ENCODE measurements at regions of chr15 and their contacts with region 1.

Region 1: DNA sequence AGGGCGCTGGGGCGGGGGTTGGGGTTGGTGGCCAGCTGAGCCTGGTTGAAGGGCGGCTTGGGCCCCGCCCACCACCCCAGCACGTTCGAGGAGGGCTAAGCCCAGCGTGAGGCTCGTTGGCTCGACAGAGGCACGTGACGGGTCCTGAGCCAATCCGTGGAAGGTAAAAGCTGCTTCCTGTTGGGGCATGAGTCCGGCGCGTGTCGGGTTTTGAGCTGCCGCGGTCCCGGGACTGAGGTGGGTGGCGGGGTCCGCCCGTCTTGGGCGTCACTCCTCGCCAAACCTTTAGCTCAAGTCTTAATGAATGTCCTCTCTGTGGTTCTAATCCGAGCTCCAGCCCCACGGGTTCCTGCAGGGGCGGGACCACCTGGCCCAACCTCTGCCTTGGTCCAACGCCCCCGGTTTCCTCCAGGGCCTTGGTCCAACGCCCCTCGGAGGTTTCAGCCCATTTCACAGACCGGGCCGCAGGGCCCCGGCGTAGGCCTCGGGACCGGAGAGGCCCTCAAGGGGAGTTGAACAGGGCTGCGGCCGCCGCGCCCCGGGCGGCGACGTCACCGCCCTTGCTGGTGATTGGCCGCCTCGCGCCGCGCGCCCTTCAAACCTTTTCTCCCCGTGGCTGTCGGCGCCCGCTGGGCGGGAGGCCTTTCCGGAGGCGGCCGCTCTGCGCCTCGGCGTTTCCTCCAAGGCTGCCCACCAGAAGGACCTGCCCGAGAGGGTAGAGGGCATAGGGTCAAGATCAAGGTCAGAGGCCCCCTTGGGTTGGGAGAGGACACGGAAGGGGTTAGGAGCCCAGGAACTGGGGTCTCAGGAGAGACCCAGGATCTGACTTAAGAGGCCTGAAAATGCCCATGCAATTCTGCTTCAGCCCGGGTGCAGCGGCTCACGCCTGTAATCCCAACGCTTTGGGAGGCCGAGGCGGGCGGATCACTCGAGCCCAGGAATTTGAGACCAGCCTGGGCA is at the start of gene RCCD1:
- DNase-seq: peak; percentile 92
- ATAC-seq: peak; percentile 95
- H3K4me3 ChIP-seq: peak within 1 kb of the TSS; percentile 69 to 93 (median 89)
- H3K4me3 Mint-ChIP-seq: peak within 1 kb of the TSS; percentile 90
- H3K27ac ChIP-seq: peak within 1 kb of the TSS; percentile 97
- H3K27ac Mint-ChIP-seq: peak within 1 kb of the TSS; percentile 92
- H3K4me1 ChIP-seq: peaks cover 16 to 24% of the 10 kb centered on the region in 2 donors
- H3K4me1 Mint-ChIP-seq: peaks cover 21% of the 10 kb centered on the region
- H3K27me3 ChIP-seq: no peaks in the 10 kb centered on the region
- H3K27me3 Mint-ChIP-seq: no peaks in the 10 kb centered on the region
- CTCF ChIP-seq: no peak
- total RNA-seq, gene RCCD1: 18.9 and 20.5 TPM in 2 replicates

Region 2: DNA sequence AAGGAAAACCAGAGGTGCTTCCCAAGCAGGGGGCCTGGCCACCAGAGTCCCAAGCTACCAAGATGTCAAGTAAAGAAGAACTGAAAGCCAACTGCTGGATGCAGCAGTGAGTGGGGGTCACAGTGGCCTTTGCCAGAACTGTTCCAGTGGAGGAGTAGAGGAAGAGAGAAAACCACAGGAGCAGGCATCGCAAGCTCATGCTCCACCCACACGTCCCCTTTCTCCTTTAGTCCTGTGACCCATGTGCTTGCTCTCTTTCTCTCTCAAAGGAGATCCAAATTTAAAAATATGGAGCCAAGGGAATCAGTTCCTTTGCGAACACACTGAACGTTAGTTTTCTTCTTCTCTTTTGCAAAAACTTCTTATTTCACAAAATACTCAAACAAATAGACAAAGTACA is 1879.1 kb before region 1 on chr15:
- CTCF ChIA-PET with region 1: no interaction called
- POLR2A ChIA-PET with region 1: no interaction called
- intact Hi-C with region 1: no loop called
- DNase-seq: no peak
- ATAC-seq: no peak
- H3K4me3 ChIP-seq: no peak overlapping the region
- H3K4me3 Mint-ChIP-seq: no peak overlapping the region
- H3K27ac ChIP-seq: no peak overlapping the region
- H3K27ac Mint-ChIP-seq: no peak overlapping the region
- H3K4me1 ChIP-seq: no peaks in the 10 kb centered on the region
- H3K4me1 Mint-ChIP-seq: no peaks in the 10 kb centered on the region
- H3K27me3 ChIP-seq: peaks cover 0 to 7% (median 1%) of the 10 kb centered on the region in 4 experiments
- H3K27me3 Mint-ChIP-seq: peaks cover 33% of the 10 kb centered on the region
- CTCF ChIP-seq: no peak

Region 3: GRCh38 chr15:90982135-90982534 is 27.1 kb after region 1 on chr15:
- CTCF ChIA-PET with region 1: interaction called, 46 read pairs
- POLR2A ChIA-PET with region 1: no interaction called
- intact Hi-C with region 1: loop called (anchors 2 kb)
- DNase-seq: no peak
- ATAC-seq: peak; percentile 15
- H3K4me3 ChIP-seq: peak overlapping the region in 2 of 5 experiments; percentile 25 to 35
- H3K4me3 Mint-ChIP-seq: peak overlapping the region; percentile 68
- H3K27ac ChIP-seq: peak overlapping the region; percentile 0 to 27
- H3K27ac Mint-ChIP-seq: peak overlapping the region; percentile 86
- H3K4me1 ChIP-seq: peaks cover 15 to 24% of the 10 kb centered on the region in 2 donors
- H3K4me1 Mint-ChIP-seq: peaks cover 26% of the 10 kb centered on the region
- H3K27me3 ChIP-seq: no peaks in the 10 kb centered on the region
- H3K27me3 Mint-ChIP-seq: no peaks in the 10 kb centered on the region
- CTCF ChIP-seq: no peak

Region 4: GRCh38 chr15:90994417-90995311 is 39.7 kb after region 1 on chr15 and contains the start of gene PRC1:
- CTCF ChIA-PET with region 1: interaction called, 5 read pairs
- POLR2A ChIA-PET with region 1: interaction called, 12 read pairs
- intact Hi-C with region 1: loop called (anchors 1 kb)
- DNase-seq: peak; percentile 97
- ATAC-seq: peak; percentile 97
- H3K4me3 ChIP-seq: peak within 1 kb of the TSS; percentile 61 to 93 (median 85)
- H3K4me3 Mint-ChIP-seq: peak within 1 kb of the TSS; percentile 99
- H3K27ac ChIP-seq: peak within 1 kb of the TSS; percentile 81 to 90
- H3K27ac Mint-ChIP-seq: peak within 1 kb of the TSS; percentile 96
- H3K4me1 ChIP-seq: peaks cover 10 to 14% of the 10 kb centered on the region in 2 donors
- H3K4me1 Mint-ChIP-seq: peaks cover 20% of the 10 kb centered on the region
- H3K27me3 ChIP-seq: no peaks in the 10 kb centered on the region
- H3K27me3 Mint-ChIP-seq: no peaks in the 10 kb centered on the region
- CTCF ChIP-seq: no peak
- total RNA-seq, gene PRC1: 8.1 and 11.6 TPM in 2 replicates

Region 5: DNA sequence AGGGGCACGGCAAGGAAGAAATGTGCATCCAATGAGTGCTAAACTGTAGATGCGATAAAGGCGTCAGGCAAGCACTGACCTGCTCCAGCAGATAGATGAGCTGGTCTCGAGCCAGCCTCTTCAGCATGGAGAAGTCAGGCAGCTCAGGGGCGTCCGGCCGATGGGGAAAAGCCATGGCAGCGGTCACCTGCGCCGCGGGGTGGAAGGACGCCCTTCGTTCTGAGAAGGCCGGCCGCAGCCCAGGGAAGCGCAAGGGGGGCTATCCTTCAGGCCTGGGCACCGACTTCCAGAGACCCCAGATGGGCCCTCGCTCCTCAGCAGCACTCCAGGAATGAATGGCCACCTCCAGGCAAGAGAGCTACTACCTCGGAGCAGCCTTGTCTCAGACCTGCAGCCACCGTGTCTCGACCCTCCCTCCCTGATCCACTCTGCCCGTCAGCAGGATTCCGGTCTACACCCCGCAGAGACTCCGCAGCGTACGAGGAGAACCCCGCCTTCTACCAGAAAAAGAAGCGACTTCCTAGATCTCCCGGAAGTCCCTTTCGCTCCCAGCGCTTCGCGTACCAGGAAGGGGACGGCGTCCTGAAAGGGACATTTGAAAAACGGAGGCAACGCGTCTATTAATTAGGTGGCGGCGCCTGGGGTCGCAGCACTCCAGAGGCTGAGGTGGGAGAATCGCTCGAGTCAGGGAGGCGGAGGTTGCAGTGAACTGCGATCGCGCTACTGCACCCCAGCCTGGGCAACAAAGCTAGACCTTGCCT is 67.3 kb after region 1 on chr15 and contains the start of gene VPS33B:
- CTCF ChIA-PET with region 1: interaction called, 27 read pairs
- POLR2A ChIA-PET with region 1: no interaction called
- intact Hi-C with region 1: loop called (anchors 5 kb)
- DNase-seq: peak; percentile 89
- ATAC-seq: peak; percentile 84
- H3K4me3 ChIP-seq: peak within 1 kb of the TSS; percentile 79 to 97 (median 92)
- H3K4me3 Mint-ChIP-seq: peak within 1 kb of the TSS; percentile 91
- H3K27ac ChIP-seq: peak within 1 kb of the TSS; percentile 62 to 69
- H3K27ac Mint-ChIP-seq: peak within 1 kb of the TSS; percentile 89
- H3K4me1 ChIP-seq: peaks cover 15 to 17% of the 10 kb centered on the region in 2 donors
- H3K4me1 Mint-ChIP-seq: peaks cover 37% of the 10 kb centered on the region
- H3K27me3 ChIP-seq: no peaks in the 10 kb centered on the region
- H3K27me3 Mint-ChIP-seq: no peaks in the 10 kb centered on the region
- CTCF ChIP-seq: no peak
- total RNA-seq, gene VPS33B: 27.7 and 30.0 TPM in 2 replicates

Region 6: DNA sequence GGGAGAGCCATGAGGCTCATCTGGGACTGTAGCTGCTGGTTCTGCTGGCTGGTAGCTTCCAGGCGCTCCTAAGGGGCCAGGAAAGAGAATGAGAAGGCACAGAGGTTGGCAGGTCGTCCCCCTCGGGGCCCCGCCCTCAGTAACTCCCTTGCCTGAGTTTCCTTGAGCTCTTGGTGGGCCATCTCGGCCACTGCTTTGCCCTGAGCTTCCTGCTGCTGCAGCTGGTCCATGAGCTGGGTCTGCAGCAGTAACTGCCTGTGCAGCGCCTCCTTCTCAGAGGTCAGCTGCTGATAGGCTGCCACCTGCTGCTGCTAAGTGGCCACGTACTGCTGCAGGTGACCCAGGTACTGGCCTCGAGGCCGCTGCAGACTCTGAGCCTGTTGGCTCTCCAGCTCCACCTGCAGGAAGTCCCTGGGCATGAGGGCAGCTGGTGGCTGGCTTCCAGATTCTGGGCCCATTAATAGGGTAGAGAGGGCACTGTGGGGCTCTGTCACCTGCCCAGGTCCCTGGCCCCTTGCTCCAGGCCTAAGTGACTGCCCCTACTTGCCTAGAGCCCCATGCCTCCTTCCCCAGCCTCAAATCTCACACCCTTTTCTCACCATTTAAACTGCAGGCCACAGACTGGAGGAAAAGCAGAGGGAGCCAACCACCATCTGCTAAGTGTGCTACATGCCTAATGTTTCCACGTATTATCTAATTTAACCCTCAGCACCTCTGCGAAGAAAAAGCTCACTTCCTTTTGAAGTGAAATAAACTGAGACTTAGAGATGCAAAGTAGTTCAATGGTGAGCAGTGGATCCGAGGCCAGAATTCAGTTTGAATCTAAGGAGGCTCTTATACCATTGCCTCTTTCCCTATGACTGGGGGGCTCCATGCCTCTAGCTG is 78.2 kb after region 1 on chr15:
- CTCF ChIA-PET with region 1: interaction called, 66 read pairs
- POLR2A ChIA-PET with region 1: interaction called, 3 read pairs
- intact Hi-C with region 1: loop called (anchors 1 kb)
- DNase-seq: peak; percentile 57
- ATAC-seq: peak; percentile 63
- H3K4me3 ChIP-seq: no peak overlapping the region
- H3K4me3 Mint-ChIP-seq: no peak overlapping the region
- H3K27ac ChIP-seq: no peak overlapping the region
- H3K27ac Mint-ChIP-seq: no peak overlapping the region
- H3K4me1 ChIP-seq: peaks cover 0 to 5% of the 10 kb centered on the region in 2 donors
- H3K4me1 Mint-ChIP-seq: peaks cover 3% of the 10 kb centered on the region
- H3K27me3 ChIP-seq: peaks cover 0 to 3% (median 0%) of the 10 kb centered on the region in 4 experiments
- H3K27me3 Mint-ChIP-seq: no peaks in the 10 kb centered on the region
- CTCF ChIP-seq: peak; percentile 73

Region 7: DNA sequence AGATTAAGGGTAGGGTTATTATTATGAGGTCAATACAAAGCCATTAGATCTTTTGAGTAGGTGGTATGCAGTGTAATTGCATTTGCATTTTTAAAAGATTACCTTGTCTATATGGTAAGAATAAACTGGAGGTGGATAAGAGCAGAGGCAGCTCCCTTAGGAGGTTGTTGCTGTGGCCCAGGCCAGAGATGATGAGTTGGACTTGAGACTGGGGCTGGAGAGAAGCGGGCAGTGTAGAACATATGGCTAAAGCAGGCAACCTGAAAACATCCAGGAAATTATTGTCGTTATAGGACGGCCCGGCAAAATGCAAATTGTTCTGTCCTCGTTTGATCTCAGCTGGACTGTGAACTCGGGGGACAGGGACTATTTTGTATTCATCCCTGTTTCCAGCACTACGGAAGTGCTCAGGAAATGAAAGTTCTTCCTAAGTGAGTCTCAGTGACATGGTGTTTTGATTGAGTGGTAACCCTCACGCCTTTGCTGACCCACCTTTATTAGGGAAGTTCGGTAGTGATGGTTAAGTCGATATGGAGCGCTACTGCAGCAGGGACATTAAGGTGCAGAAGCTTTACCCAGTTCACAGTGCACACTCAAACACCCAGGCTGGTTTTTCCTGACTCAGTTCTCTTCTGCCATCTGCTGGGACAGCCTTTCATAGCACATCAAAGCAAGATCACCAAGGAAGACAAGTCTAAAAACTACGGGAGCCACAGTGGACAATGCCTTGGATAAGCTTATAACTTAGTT is 94.6 kb after region 1 on chr15:
- CTCF ChIA-PET with region 1: interaction called, 44 read pairs
- POLR2A ChIA-PET with region 1: no interaction called
- intact Hi-C with region 1: loop called (anchors 1 kb)
- DNase-seq: peak; percentile 66
- ATAC-seq: peak; percentile 81
- H3K4me3 ChIP-seq: no peak overlapping the region
- H3K4me3 Mint-ChIP-seq: no peak overlapping the region
- H3K27ac ChIP-seq: no peak overlapping the region
- H3K27ac Mint-ChIP-seq: no peak overlapping the region
- H3K4me1 ChIP-seq: peaks cover 10 to 13% of the 10 kb centered on the region in 2 donors
- H3K4me1 Mint-ChIP-seq: peaks cover 13% of the 10 kb centered on the region
- H3K27me3 ChIP-seq: peaks cover 0 to 11% (median under 1%) of the 10 kb centered on the region in 4 experiments
- H3K27me3 Mint-ChIP-seq: peaks cover 31% of the 10 kb centered on the region
- CTCF ChIP-seq: peak; percentile 60

Region 8: DNA sequence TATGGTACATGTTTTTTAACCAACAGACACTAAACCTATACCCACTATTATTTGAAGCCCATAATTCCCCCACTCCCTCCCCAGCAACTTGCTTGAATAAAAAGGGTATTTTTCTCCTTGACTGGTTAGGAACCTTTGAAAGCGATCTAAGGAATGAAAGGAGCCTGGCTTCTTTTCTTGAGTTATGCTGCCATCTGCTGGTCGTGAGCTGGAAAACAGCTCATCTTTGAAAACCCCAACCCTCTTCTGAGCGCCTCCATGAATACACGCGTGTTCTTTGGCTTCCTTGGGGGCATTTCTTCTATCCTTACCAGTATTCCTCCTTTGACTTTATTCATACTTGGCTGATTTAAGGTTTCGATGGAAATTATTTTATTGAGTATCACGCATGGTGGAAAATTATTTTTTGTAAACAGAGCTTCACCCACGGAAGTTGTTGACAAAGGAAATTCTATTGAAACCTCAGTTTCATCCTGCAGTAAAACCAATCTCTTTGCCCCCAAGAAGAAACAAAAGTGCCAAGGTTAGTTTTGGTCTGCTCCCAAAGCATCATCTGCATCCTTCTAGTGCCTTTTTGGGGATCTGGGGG is 316.7 kb after region 1 on chr15:
- CTCF ChIA-PET with region 1: interaction called, 29 read pairs
- POLR2A ChIA-PET with region 1: no interaction called
- intact Hi-C with region 1: loop called (anchors 2 kb)
- DNase-seq: peak; percentile 74
- ATAC-seq: peak; percentile 33
- H3K4me3 ChIP-seq: no peak overlapping the region
- H3K4me3 Mint-ChIP-seq: no peak overlapping the region
- H3K27ac ChIP-seq: no peak overlapping the region
- H3K27ac Mint-ChIP-seq: no peak overlapping the region
- H3K4me1 ChIP-seq: peaks cover 0 to 4% of the 10 kb centered on the region in 2 donors
- H3K4me1 Mint-ChIP-seq: peaks cover 4% of the 10 kb centered on the region
- H3K27me3 ChIP-seq: peaks cover 0 to 6% (median 3%) of the 10 kb centered on the region in 4 experiments
- H3K27me3 Mint-ChIP-seq: peaks cover 40% of the 10 kb centered on the region
- CTCF ChIP-seq: peak; percentile 87

Region 9: GRCh38 chr15:91660174-91660653 is 705.2 kb after region 1 on chr15:
- CTCF ChIA-PET with region 1: no interaction called
- POLR2A ChIA-PET with region 1: no interaction called
- intact Hi-C with region 1: no loop called
- DNase-seq: no peak
- ATAC-seq: no peak
- H3K4me3 ChIP-seq: no peak overlapping the region
- H3K4me3 Mint-ChIP-seq: no peak overlapping the region
- H3K27ac ChIP-seq: no peak overlapping the region
- H3K27ac Mint-ChIP-seq: no peak overlapping the region
- H3K4me1 ChIP-seq: no peaks in the 10 kb centered on the region
- H3K4me1 Mint-ChIP-seq: no peaks in the 10 kb centered on the region
- H3K27me3 ChIP-seq: no peaks in the 10 kb centered on the region
- H3K27me3 Mint-ChIP-seq: peaks cover 11% of the 10 kb centered on the region
- CTCF ChIP-seq: no peak

Measured in B cell (primary cell).